ENCODE measurements at regions of chr5 and their contacts with region 1.

Region 1: GRCh38 chr5:38441453-38442246 is 114.8 kb downstream of the LIFR start:
- DNase-seq: peak; percentile 86
- H3K4me3 ChIP-seq: no peak overlapping the region
- H3K27ac ChIP-seq: no peak overlapping the region
- H3K4me1 ChIP-seq: no peaks in the 10 kb centered on the region
- CTCF ChIP-seq: peak; percentile 98

Region 2: GRCh38 chr5:38258319-38259061 is 183.2 kb before region 1 on chr5 and contains the start of gene EGFLAM:
- CTCF ChIA-PET with region 1: no interaction called
- POLR2A ChIA-PET with region 1: no interaction called
- intact Hi-C with region 1: no loop called
- DNase-seq: no peak
- H3K4me3 ChIP-seq: no peak within 1 kb of the TSS
- H3K27ac ChIP-seq: no peak within 1 kb of the TSS
- H3K4me1 ChIP-seq: no peaks in the 10 kb centered on the region
- CTCF ChIP-seq: no peak
- total RNA-seq, gene EGFLAM: not detected in 2 replicates

Region 3: DNA sequence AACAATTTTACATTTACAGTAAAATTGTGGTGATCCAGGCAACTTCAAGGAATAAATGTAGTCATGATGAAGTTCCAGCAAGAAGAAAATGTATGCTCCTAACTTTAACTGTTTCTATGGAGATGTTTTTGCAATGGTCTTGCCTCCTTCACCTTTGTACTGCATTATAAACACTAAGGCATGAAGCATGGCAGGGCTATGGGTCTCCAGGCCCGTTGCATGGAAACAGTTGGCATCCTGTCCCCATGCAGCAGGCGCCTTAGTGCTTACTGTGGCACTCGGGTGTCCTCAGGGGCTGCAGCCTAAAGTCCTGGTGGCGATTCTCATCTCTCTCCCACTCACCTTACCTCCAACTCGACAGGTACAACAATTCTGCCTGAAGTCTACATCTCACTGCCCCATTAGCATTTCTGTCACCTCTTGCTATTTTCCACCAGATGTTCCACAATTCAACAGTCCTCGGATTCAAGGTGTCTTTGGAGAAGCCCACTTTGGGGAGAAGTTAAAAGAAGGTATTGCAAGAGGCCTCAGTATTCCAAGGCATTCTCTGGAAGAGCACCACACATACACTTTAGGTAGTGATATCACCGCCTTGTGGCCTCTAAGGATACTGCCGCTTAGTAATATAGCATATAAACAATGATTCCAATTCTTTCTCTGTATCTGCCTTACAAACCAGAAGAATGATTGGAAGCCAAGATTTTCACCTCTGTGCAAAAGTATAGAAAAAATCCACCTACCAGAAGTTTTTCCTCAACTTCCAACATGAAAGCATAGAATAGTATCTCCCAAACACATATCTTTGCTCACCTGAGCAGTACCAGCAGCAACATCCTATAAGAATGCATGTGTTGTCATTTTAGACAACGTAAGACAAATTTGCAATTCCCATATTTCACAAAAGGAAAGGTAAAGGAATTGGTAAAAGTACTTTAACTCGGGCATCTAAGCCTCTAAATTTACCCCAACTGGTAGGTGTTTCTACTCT is 109.7 kb after region 1 on chr5:
- CTCF ChIA-PET with region 1: no interaction called
- POLR2A ChIA-PET with region 1: no interaction called
- intact Hi-C with region 1: loop called (anchors 1 kb)
- DNase-seq: peak; percentile 14
- H3K4me3 ChIP-seq: no peak overlapping the region
- H3K27ac ChIP-seq: no peak overlapping the region
- H3K4me1 ChIP-seq: no peaks in the 10 kb centered on the region
- CTCF ChIP-seq: peak; percentile 78

Region 4: DNA sequence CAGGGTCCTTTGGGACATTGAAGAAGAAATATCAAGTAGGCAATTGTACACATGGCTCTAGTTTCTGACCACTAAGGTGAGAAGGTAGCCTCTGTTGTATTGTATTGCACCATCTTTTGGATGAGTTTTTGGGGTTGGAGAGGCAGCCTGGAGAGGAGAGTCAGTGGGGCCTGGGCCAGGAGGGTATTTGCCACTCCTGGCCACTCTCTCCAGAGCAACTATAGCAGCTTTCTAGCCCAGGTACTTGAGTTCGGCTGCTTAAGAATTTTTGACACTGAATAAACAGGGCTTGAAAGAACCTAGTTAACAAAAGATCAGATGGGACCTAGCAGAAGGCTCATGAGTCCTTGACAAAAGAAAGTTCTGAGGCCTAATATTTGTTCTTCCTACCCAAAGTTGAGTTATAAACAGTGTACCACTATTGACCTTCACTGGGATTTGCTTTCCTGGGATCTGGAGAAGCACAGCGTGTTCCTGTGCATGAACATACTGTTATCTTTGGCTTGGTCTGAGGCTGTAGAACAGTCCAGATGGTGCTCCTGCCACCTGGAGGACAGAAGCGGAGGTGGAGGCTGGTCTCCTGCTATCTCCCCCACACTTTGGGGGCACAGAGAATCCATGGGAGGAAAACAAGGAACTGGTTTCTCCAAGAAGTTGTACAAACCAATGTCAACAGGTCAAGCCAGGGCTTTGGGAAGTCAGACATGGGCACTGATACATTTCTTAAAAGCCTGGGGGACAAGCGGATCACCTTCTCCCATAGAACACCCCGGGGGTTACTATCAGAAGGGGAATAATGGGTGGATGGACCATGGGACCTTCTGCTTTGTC is 225.2 kb after region 1 on chr5:
- CTCF ChIA-PET with region 1: interaction called, 3 read pairs
- POLR2A ChIA-PET with region 1: no interaction called
- intact Hi-C with region 1: loop called (anchors 1 kb)
- DNase-seq: peak; percentile 5
- H3K4me3 ChIP-seq: no peak overlapping the region
- H3K27ac ChIP-seq: no peak overlapping the region
- H3K4me1 ChIP-seq: no peaks in the 10 kb centered on the region
- CTCF ChIP-seq: peak; percentile 68

Region 5: GRCh38 chr5:38809388-38810359 is 368.0 kb after region 1 on chr5:
- CTCF ChIA-PET with region 1: interaction called, 9 read pairs
- POLR2A ChIA-PET with region 1: no interaction called
- intact Hi-C with region 1: loop called (anchors 1 kb)
- DNase-seq: peak; percentile 51
- H3K4me3 ChIP-seq: no peak overlapping the region
- H3K27ac ChIP-seq: no peak overlapping the region
- H3K4me1 ChIP-seq: no peaks in the 10 kb centered on the region
- CTCF ChIP-seq: peak; percentile 84

Region 6: DNA sequence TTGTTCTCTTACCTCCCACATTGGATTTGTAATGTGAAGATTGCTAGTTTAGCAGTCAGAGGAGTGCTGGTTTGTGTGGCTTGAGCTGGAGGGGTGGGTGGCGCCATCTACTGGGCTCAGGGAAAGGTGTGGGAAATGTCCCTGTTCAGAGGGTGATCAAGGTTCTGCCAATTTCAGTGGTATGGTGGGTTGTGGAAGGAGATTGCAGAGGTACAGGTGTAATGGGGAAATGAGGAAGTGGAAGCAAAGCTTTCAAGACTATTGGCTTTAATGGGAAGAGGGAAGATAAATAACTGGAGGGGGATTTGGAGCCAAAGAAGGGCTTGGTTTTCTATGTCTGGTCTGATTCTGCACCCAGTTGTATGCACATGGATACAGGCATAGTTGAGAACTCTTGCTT is 480.5 kb after region 1 on chr5:
- CTCF ChIA-PET with region 1: interaction called, 3 read pairs
- POLR2A ChIA-PET with region 1: no interaction called
- intact Hi-C with region 1: loop called (anchors 5 kb)
- DNase-seq: peak; percentile 29
- H3K4me3 ChIP-seq: no peak overlapping the region
- H3K27ac ChIP-seq: no peak overlapping the region
- H3K4me1 ChIP-seq: no peaks in the 10 kb centered on the region
- CTCF ChIP-seq: peak; percentile 91